Activated CD8-positive, alpha-beta T cell treated with anti-CD3 and anti-CD28 coated beads for 36 hours (primary cell): ENCODE measurements at regions of chr2 and their contacts with region 1.

Region 1: GRCh38 chr2:32009516-32010256 is 1.1 kb downstream of the MEMO1 start:
- DNase-seq: peak; percentile 51
- ATAC-seq: peak; percentile 8
- H3K4me3 Mint-ChIP-seq: peak overlapping the region; percentile 95
- H3K27ac Mint-ChIP-seq: peak overlapping the region; percentile 87
- H3K4me1 Mint-ChIP-seq: peaks cover 46% of the 10 kb centered on the region
- H3K27me3 Mint-ChIP-seq: no peaks in the 10 kb centered on the region
- CTCF ChIP-seq: no peak

Region 2: DNA sequence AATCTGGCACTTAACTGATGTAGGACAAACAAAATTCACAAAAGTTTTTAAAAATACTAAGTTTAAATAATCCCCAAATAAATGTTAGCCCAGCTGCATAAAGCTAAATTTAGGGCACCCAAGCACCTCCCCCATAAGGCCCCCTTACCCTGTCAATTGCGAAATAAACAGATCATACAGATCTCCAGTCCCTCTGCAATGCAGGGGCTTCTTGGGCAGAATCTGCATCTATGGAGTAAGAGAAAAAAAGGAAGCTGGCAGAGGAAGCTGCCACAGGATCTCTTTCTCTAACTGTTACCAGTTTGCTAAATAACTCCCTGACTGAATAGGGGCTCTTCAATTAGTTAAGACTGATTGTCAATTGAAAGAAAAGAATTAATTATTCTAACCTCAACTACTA is 116.6 kb before region 1 on chr2:
- CTCF ChIA-PET with region 1: no interaction called
- POLR2A ChIA-PET with region 1: no interaction called
- intact Hi-C with region 1: no loop called
- DNase-seq: no peak
- ATAC-seq: no peak
- H3K4me3 Mint-ChIP-seq: no peak overlapping the region
- H3K27ac Mint-ChIP-seq: no peak overlapping the region
- H3K4me1 Mint-ChIP-seq: peaks cover 2% of the 10 kb centered on the region
- H3K27me3 Mint-ChIP-seq: no peaks in the 10 kb centered on the region
- CTCF ChIP-seq: no peak

Region 3: GRCh38 chr2:31950946-31951562 is 58.6 kb before region 1 on chr2:
- CTCF ChIA-PET with region 1: no interaction called
- POLR2A ChIA-PET with region 1: no interaction called
- intact Hi-C with region 1: loop called (anchors 5 kb)
- DNase-seq: no peak
- ATAC-seq: peak; percentile 60
- H3K4me3 Mint-ChIP-seq: no peak overlapping the region
- H3K27ac Mint-ChIP-seq: no peak overlapping the region
- H3K4me1 Mint-ChIP-seq: peaks cover 31% of the 10 kb centered on the region
- H3K27me3 Mint-ChIP-seq: no peaks in the 10 kb centered on the region
- CTCF ChIP-seq: no peak

Region 4: GRCh38 chr2:32039447-32040219 is 29.9 kb after region 1 on chr2 and contains the start of gene DPY30:
- CTCF ChIA-PET with region 1: interaction called, 3 read pairs
- POLR2A ChIA-PET with region 1: interaction called, 10 read pairs
- intact Hi-C with region 1: no loop called
- DNase-seq: peak; percentile 93
- ATAC-seq: peak; percentile 96
- H3K4me3 Mint-ChIP-seq: peak within 1 kb of the TSS; percentile 90
- H3K27ac Mint-ChIP-seq: peak within 1 kb of the TSS; percentile 89
- H3K4me1 Mint-ChIP-seq: peaks cover 11% of the 10 kb centered on the region
- H3K27me3 Mint-ChIP-seq: no peaks in the 10 kb centered on the region
- CTCF ChIP-seq: no peak
- total RNA-seq, gene DPY30: 68.5 to 68.8 TPM

Region 5: GRCh38 chr2:32632089-32632488 is 622.4 kb after region 1 on chr2:
- CTCF ChIA-PET with region 1: no interaction called
- POLR2A ChIA-PET with region 1: no interaction called
- intact Hi-C with region 1: no loop called
- DNase-seq: peak; percentile 63
- ATAC-seq: no peak
- H3K4me3 Mint-ChIP-seq: no peak overlapping the region
- H3K27ac Mint-ChIP-seq: peak overlapping the region; percentile 32
- H3K4me1 Mint-ChIP-seq: peaks cover 24% of the 10 kb centered on the region
- H3K27me3 Mint-ChIP-seq: no peaks in the 10 kb centered on the region
- CTCF ChIP-seq: no peak